Psoas muscle (tissue), 8 donors: ENCODE measurements at regions of chr22 and their contacts with region 1.

Region 1: DNA sequence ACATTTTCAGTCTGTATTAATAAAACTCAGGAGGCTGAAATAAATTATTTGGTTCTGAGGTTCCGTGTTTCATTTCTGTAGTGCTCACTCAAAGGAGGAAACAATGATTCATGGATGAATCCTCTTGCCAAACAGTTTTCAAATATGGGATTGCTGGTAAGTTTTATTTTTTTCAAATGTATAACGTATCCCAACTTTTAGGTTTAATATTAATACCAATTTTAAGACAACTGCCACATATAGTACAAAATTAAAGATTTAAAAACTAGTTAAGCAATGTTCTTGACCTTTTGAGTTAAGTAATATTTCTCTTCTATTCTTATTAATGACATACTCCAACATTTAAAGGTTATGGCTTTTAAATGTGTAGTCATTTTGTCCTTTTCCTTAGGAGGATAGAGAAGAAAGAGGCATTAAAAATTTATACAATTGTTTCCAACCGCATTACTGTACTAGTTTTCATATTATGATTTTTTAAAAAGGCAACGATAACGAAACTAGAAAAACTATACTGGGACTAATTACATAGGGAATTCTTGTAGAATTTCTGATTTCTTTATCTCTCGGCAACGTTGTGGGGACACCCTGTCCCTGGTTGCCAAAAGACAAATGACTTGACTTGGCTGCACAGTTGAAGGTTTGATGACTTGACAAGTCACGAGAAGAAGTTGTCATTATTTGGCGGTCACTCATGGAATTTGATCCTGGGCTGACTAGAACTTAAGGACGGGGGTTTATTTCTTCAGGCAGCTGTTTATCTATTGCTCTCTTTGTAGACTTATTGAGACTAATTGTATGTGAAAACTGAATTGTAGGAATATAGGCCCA is 69.1 kb upstream of the ADSL start:
- DNase-seq: peak in 1 of 2 donors; percentile 32
- ATAC-seq: peak; percentile 91 to 94 (median 92)
- H3K4me3 ChIP-seq: peak overlapping the region; percentile 54
- H3K27ac ChIP-seq: peak overlapping the region; percentile 87
- H3K4me1 ChIP-seq: peaks cover 17% of the 10 kb centered on the region
- H3K27me3 ChIP-seq: no peaks in the 10 kb centered on the region
- CTCF ChIP-seq: no peak

Region 2: DNA sequence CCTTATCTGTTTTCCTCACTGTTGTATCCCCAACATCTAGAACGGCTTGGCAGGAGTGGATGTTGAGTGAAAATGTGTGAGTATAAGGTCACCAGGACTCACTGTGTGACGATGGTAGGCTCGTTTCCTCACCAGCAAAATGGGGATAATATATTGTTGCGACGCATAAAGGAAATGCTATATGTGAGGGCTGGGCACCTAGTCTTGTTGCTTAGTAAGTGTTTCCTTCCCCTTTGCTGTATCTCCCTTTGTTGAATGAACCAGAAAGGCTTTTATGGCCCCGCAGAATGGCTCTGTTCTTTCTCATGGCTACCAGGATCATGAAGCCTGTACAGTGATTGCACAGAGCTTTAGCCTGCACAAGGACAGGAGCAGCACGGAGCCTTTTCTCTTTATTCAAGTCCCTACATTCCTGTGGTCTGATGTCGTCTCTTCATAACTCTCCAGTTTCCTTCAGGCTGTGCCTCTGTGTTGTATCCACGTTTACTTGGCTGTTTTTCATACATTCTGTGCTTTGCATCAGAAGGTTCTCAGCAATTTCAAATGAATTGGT is 94.1 kb before region 1 on chr22:
- intact Hi-C with region 1: loop called (anchors 2 to 10 kb)
- DNase-seq: no peak
- ATAC-seq: peak; percentile 20 to 82 (median 66)
- H3K4me3 ChIP-seq: peak overlapping the region; percentile 35
- H3K27ac ChIP-seq: peak overlapping the region; percentile 82
- H3K4me1 ChIP-seq: peaks cover 87% of the 10 kb centered on the region
- H3K27me3 ChIP-seq: no peaks in the 10 kb centered on the region
- CTCF ChIP-seq: no peak

Region 3: GRCh38 chr22:40220316-40221054 is 56.7 kb before region 1 on chr22:
- intact Hi-C with region 1: no loop called
- DNase-seq: no peak
- ATAC-seq: no peak
- H3K4me3 ChIP-seq: no peak overlapping the region
- H3K27ac ChIP-seq: peak overlapping the region; percentile 77
- H3K4me1 ChIP-seq: peaks cover 67% of the 10 kb centered on the region
- H3K27me3 ChIP-seq: no peaks in the 10 kb centered on the region
- CTCF ChIP-seq: no peak